ENCODE measurements at regions of chr4 and their contacts with region 1.

Region 1: GRCh38 chr4:173025131-173025530 is 143.5 kb upstream of the GALNT7 start:
- DNase-seq: peak; percentile 93
- H3K4me3 ChIP-seq: no peak overlapping the region
- H3K27ac ChIP-seq: no peak overlapping the region
- H3K4me1 ChIP-seq: peaks cover 52% of the 10 kb centered on the region
- H3K27me3 ChIP-seq: no peaks in the 10 kb centered on the region
- CTCF ChIP-seq: peak; percentile 83

Region 2: DNA sequence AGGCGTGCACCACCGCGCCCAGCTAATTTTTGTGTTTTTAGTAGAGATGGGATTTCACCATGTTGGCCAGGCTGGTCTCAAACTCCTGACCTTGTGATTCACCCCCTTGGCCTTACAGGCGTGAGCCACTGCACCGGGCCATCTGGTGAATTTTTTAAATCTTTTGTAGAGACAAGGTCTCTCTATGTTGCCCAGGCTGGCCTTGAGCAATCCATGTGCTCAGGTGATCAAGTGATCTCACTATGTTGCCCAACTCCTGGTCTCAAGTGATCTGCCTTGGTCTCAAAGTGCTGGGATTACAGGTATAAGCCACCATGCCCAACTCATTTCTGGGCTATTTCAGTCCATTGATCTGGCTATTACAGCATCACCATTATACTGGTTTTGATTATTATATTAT is 121.3 kb after region 1 on chr4:
- CTCF ChIA-PET with region 1: no interaction called
- POLR2A ChIA-PET with region 1: no interaction called
- intact Hi-C with region 1: loop called (anchors 1 kb)
- DNase-seq: no peak
- H3K4me3 ChIP-seq: no peak overlapping the region
- H3K27ac ChIP-seq: no peak overlapping the region
- H3K4me1 ChIP-seq: peaks cover 24% of the 10 kb centered on the region
- H3K27me3 ChIP-seq: no peaks in the 10 kb centered on the region
- CTCF ChIP-seq: no peak

Region 3: DNA sequence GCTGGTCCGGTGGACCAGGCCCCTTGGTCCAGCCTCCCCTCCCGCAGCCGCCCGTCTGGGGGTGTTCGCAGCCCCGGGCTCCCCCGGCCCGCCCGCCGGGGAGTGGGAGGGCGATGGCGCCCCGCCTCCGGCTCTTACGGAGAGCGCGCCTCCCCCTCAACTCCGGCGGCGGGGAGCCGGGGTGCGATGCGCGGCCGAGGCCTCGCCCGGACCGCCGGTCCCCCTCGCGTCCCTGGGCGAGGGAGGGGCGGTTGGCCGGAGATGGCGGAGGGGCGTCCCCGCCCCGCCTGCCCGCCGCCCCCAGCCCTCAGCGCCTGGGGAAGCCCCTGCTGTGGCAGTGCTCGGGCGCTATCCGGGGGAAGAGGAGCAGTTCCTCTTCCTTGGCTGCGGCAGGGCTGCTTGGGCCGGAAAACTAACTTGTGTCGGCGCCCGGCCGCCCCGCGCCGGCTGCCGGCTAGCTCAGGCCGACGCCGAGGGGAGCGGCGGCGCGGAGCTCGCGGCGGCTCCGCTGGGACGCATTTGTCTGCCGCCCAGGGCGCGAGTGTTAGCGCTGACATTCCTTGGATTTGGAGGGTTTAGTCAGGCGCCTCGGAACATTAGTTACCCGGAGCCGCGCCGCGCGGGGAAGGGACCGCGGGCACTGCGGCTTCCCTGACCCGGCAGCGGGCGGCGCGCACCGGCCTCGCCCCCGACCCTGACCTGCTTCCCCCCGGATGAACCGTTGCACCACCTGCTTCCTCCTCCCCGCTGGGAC is 144.5 kb after region 1 on chr4:
- CTCF ChIA-PET with region 1: no interaction called
- POLR2A ChIA-PET with region 1: no interaction called
- intact Hi-C with region 1: loop called (anchors 2 kb)
- DNase-seq: peak; percentile 83
- H3K4me3 ChIP-seq: peak overlapping the region; percentile 74
- H3K27ac ChIP-seq: peak overlapping the region; percentile 90
- H3K4me1 ChIP-seq: peaks cover 42% of the 10 kb centered on the region
- H3K27me3 ChIP-seq: no peaks in the 10 kb centered on the region
- CTCF ChIP-seq: no peak

Region 4: DNA sequence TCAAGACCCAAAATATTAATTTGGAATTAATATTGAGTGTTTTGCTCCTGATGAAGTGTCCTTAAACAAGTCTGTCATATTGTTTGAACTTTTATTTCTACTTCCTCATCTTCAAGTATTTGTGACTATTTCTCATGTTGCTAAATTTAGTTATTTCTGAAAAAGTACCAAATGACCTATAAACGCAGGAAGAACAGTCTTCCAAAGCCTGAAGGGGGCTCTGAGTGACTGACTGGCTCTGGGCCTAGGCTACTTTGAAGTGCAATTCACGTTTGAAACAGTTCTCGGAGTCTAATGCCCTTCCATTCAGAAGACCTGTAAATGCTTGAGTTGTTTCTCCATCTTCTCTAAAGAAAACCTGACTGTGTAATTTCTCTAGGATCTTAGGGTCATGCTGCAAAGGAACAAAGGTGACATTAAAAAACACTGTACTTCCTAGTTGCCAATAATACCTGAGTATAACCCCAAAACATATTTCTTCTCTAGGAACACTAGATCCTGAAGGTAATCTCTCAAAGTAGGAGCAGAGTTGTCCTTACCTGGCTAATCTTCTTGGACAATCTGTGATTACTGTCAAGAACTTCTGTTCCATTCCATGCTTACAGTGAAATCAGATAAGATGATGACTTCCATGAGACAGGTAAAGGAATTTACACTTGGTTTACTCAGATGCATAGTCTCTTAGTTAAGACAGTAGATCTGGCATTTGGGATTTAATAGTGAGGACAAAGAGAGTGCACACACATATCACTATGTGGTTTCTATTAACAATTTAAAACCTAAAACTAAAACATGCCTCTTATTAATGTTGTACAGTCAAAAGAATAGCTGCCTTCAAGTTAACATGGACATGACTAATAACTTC is 170.2 kb after region 1 on chr4:
- CTCF ChIA-PET with region 1: no interaction called
- POLR2A ChIA-PET with region 1: no interaction called
- intact Hi-C with region 1: no loop called
- DNase-seq: no peak
- H3K4me3 ChIP-seq: no peak overlapping the region
- H3K27ac ChIP-seq: no peak overlapping the region
- H3K4me1 ChIP-seq: peaks cover 40% of the 10 kb centered on the region
- H3K27me3 ChIP-seq: no peaks in the 10 kb centered on the region
- CTCF ChIP-seq: 0 out of 2 replicates have a peak, but pooled peaks have one; percentile 9

Region 5: DNA sequence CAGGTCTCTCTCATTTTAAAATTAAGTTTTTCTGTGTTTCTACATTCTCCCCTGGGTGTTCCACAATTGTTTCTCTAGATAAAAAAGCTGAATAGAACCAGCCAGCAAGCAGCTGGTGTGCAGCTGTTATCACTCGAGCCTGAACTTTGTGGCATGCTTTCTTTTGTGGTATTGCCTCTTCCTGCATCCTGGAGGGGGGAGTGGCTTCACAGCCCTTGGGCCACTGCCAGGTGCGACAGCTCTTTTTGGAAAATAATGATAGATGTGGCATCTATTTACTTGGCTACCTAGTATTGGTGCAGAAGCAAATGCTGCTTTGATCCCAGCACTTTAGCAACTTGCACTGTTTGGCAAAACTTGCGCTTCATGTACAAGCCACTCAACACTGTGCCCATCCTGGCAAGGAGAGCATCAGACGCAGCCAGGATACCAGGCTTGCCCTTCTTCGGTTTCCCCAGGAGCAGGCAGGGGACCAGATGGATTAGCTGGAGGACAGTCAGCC is 239.6 kb after region 1 on chr4:
- CTCF ChIA-PET with region 1: interaction called, 3 read pairs
- POLR2A ChIA-PET with region 1: no interaction called
- intact Hi-C with region 1: loop called (anchors 2 kb)
- DNase-seq: peak; percentile 92
- H3K4me3 ChIP-seq: no peak overlapping the region
- H3K27ac ChIP-seq: peak overlapping the region; percentile 81
- H3K4me1 ChIP-seq: peaks cover 63% of the 10 kb centered on the region
- H3K27me3 ChIP-seq: no peaks in the 10 kb centered on the region
- CTCF ChIP-seq: no peak

Measured in A673 (cell line).